HCT116 (cell line): ENCODE measurements at regions of chrX and their contacts with region 1.

Region 1: GRCh38 chrX:41457613-41458192 is 10.6 kb downstream of the NYX start:
- DNase-seq: no peak
- ATAC-seq: 0 out of 2 replicates have a peak, but pooled peaks have one; percentile 17
- H3K4me3 ChIP-seq: no peak overlapping the region
- H3K27ac ChIP-seq: no peak overlapping the region
- H3K4me1 ChIP-seq: no peaks in the 10 kb centered on the region
- H3K27me3 ChIP-seq: no peaks in the 10 kb centered on the region
- CTCF ChIP-seq: peak; percentile 6 to 42 (median 36); a peak in 3 of 6 replicates
- POLR2A ChIP-seq: no peak
- RAD21 ChIP-seq: peak; percentile 42; the same call in 1 of the 2 replicates

Region 2: GRCh38 chrX:40735325-40736169 is 722.2 kb before region 1 on chrX and contains the start of gene MED14:
- CTCF ChIA-PET with region 1: no interaction called
- POLR2A ChIA-PET with region 1: no interaction called
- RAD21 ChIA-PET with region 1: no interaction called
- intact Hi-C with region 1: no loop called
- DNase-seq: peak; percentile 72
- ATAC-seq: peak; percentile 95
- H3K4me3 ChIP-seq: peak within 1 kb of the TSS; percentile 68 to 72
- H3K27ac ChIP-seq: peak within 1 kb of the TSS; percentile 76
- H3K4me1 ChIP-seq: peaks cover 0 to 13% of the 10 kb centered on the region in 2 experiments; a peak in 2 of 4 replicates
- H3K27me3 ChIP-seq: no peaks in the 10 kb centered on the region
- CTCF ChIP-seq: peak in 2 of 3 experiments; percentile 30 to 48; a peak in 2 of 6 replicates
- POLR2A ChIP-seq: peak; percentile 21
- RAD21 ChIP-seq: peak; percentile 12; the same call in 1 of the 2 replicates
- total RNA-seq, gene MED14: 51.8 TPM

Region 3: GRCh38 chrX:41275661-41276609 is 181.8 kb before region 1 on chrX:
- CTCF ChIA-PET with region 1: no interaction called
- POLR2A ChIA-PET with region 1: no interaction called
- RAD21 ChIA-PET with region 1: no interaction called
- intact Hi-C with region 1: loop called (anchors 5 kb)
- DNase-seq: no peak
- ATAC-seq: peak; percentile 90
- H3K4me3 ChIP-seq: peak overlapping the region; percentile 48 to 62
- H3K27ac ChIP-seq: peak overlapping the region; percentile 56; the same call in 1 of the 2 replicates
- H3K4me1 ChIP-seq: peaks cover 0 to 7% of the 10 kb centered on the region in 2 experiments; a peak in 2 of 4 replicates
- H3K27me3 ChIP-seq: no peaks in the 10 kb centered on the region
- CTCF ChIP-seq: peak; percentile 16 to 38 (median 37); a peak in 3 of 6 replicates
- POLR2A ChIP-seq: no peak
- RAD21 ChIP-seq: peak; percentile 76